PC-9 (cell line): ENCODE measurements at regions of chr5 and their contacts with region 1.

Region 1: GRCh38 chr5:56414066-56414465 is 180.9 kb upstream of the ANKRD55 start:
- DNase-seq: no peak
- H3K4me3 ChIP-seq: no peak overlapping the region
- H3K27ac ChIP-seq: 0 out of 2 replicates have a peak overlapping the region, but pooled peaks have one; percentile 87
- H3K4me1 ChIP-seq: peaks cover 49% of the 10 kb centered on the region
- H3K27me3 ChIP-seq: no peaks in the 10 kb centered on the region
- CTCF ChIP-seq: no peak

Region 2: DNA sequence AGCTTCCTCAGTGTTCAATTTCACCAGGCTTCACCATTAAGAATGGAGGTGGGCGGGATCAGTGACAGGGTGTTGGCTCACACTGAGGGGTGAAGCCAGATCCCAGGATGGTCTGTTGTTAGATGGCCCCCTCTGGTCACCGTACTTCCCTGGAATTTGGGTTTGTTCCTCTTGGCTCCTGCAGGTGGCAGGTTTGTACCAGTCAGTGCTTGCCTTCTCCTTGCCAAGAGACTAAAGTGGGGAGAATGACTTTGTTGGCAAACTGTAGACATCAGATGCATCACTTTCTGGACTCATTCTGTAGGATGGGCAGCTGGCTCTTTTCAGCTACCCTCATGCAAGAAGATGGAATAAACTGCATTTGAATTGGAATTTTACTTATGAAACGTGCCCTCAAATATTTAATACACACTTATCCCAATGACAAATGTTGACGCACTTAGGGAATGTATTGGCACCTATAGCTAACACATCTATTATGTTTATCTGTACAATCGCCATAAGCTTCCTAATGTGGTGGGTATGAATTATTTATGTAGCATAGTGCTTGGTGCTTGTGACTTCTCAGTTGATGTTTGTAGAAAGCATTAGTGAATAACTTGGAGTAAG is 149.5 kb before region 1 on chr5:
- CTCF ChIA-PET with region 1: no interaction called
- POLR2A ChIA-PET with region 1: interaction called, 12 read pairs
- intact Hi-C with region 1: no loop called
- DNase-seq: no peak
- H3K4me3 ChIP-seq: no peak overlapping the region
- H3K27ac ChIP-seq: no peak overlapping the region
- H3K4me1 ChIP-seq: peaks cover 2% of the 10 kb centered on the region
- H3K27me3 ChIP-seq: no peaks in the 10 kb centered on the region
- CTCF ChIP-seq: peak; percentile 64

Region 3: DNA sequence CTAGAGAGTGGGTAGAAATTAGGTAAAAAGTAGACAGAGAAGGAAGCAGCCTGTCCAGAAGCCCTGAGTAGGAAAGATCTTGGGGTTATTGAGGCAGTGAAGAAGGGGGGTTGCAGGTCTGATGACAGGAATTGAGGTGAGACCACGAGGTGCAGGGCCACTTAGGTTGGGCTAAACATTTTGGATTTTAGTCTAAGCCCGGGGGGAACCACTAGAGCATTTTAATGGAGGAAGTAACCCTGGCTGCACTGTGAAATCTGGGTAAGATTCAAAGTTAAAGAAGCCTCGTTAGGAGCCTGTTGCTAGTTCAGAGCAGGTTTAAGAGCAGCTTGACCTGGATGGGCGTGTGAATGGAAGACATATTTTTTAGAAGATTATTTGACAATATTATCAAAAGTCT is 439.6 kb after region 1 on chr5:
- CTCF ChIA-PET with region 1: no interaction called
- POLR2A ChIA-PET with region 1: interaction called, 15 read pairs
- intact Hi-C with region 1: no loop called
- DNase-seq: no peak
- H3K4me3 ChIP-seq: no peak overlapping the region
- H3K27ac ChIP-seq: no peak overlapping the region
- H3K4me1 ChIP-seq: 0 out of 2 replicates have a peak, but pooled peaks cover 3% of the 10 kb centered on the region
- H3K27me3 ChIP-seq: no peaks in the 10 kb centered on the region
- CTCF ChIP-seq: no peak